Stomach (tissue), 19 donors: ENCODE measurements at regions of chr18 and their contacts with region 1.

Region 1: GRCh38 chr18:78571831-78572347 is 407.7 kb upstream of the SALL3 start:
- DNase-seq: no peak
- H3K4me3 ChIP-seq: no peak overlapping the region
- H3K27ac ChIP-seq: no peak overlapping the region
- H3K4me1 ChIP-seq: no peaks in the 10 kb centered on the region
- H3K27me3 ChIP-seq: no peaks in the 10 kb centered on the region
- CTCF ChIP-seq: no peak
- EP300 ChIP-seq: no peak
- POLR2A ChIP-seq: no peak

Region 2: DNA sequence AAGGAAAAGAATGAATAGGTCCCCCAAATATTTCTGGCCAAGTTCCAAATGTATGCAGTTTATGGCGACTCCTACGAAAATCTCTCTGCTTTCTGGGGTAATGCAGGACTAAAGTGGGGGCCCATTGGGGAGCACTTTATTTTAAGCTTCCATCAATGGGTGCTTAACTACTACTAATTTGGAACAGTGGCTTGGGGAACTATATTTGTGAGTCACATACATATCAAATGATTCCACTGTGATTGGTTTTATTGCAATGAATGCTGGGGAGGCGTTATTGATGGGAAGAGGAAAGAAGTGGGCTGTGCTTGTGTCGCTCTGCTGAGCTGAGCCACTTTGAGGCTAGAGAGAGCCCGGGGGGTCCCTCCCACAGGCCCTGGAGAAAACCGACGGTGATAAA is 152.7 kb before region 1 on chr18:
- intact Hi-C with region 1: no loop called
- DNase-seq: no peak
- H3K4me3 ChIP-seq: no peak overlapping the region
- H3K27ac ChIP-seq: no peak overlapping the region
- H3K4me1 ChIP-seq: no peaks in the 10 kb centered on the region
- H3K27me3 ChIP-seq: no peaks in the 10 kb centered on the region
- CTCF ChIP-seq: no peak
- EP300 ChIP-seq: no peak
- POLR2A ChIP-seq: no peak

Region 3: GRCh38 chr18:78430131-78430758 is 141.6 kb before region 1 on chr18:
- intact Hi-C with region 1: no loop called
- DNase-seq: no peak
- H3K4me3 ChIP-seq: no peak overlapping the region
- H3K27ac ChIP-seq: no peak overlapping the region
- H3K4me1 ChIP-seq: no peaks in the 10 kb centered on the region
- H3K27me3 ChIP-seq: peaks cover 0 to 4% (median 0%) of the 10 kb centered on the region in 3 donors
- CTCF ChIP-seq: no peak
- EP300 ChIP-seq: no peak
- POLR2A ChIP-seq: no peak

Region 4: GRCh38 chr18:78624646-78625279 is 52.9 kb after region 1 on chr18:
- intact Hi-C with region 1: loop called (anchors 5 kb)
- DNase-seq: peak in 1 of 2 donors; percentile 21
- H3K4me3 ChIP-seq: no peak overlapping the region
- H3K27ac ChIP-seq: no peak overlapping the region
- H3K4me1 ChIP-seq: no peaks in the 10 kb centered on the region
- H3K27me3 ChIP-seq: peaks cover 0 to 46% (median 6%) of the 10 kb centered on the region in 3 donors
- CTCF ChIP-seq: no peak
- EP300 ChIP-seq: no peak
- POLR2A ChIP-seq: no peak